ENCODE measurements at regions of chr16 and their contacts with region 1.

Region 1: GRCh38 chr16:66552286-66553177 is at the start of gene CKLF:
- DNase-seq: peak; percentile 96
- H3K4me3 ChIP-seq: peak within 1 kb of the TSS; percentile 13 to 65 (median 57)
- H3K27ac ChIP-seq: peak within 1 kb of the TSS; percentile 65
- H3K4me1 ChIP-seq: peaks cover 32% of the 10 kb centered on the region
- H3K27me3 ChIP-seq: no peaks in the 10 kb centered on the region
- CTCF ChIP-seq: no peak
- POLR2A ChIP-seq: peak; percentile 83
- total RNA-seq, gene CKLF: 80.0 and 93.4 TPM in 2 replicates

Region 2: DNA sequence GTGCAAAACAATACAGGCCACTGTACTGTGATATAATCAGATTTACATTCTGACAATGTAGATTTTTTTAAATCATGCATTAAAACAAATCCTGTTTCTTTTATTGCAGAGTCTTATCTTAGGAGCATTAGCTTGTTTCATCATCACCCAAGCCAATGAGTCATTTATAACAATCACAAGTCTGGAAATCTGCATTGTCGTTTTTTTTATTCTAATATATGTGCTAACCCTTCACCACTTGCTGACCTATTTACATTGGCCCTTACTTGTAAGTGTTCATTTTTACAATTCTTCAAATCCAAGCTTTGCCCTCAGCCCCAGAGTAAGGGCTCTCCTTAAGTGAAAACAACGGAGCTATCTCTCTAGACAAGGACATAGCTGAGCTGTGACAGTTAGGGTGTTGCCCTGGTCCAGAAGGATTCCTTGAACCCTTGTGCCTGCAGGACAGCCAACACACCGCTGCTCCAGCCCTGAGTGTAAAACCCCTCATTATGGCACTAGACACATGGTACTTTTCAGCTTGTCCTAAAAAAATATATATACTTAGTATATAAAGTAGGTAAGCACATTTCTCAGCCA is 17.4 kb after region 1 on chr16:
- CTCF ChIA-PET with region 1: interaction called, 15 read pairs
- POLR2A ChIA-PET with region 1: no interaction called
- dilution Hi-C with region 1: no loop called
- intact Hi-C with region 1: loop called (anchors 1 kb)
- DNase-seq: peak; percentile 76
- H3K4me3 ChIP-seq: no peak overlapping the region
- H3K27ac ChIP-seq: peak overlapping the region; percentile 79
- H3K4me1 ChIP-seq: peaks cover 34% of the 10 kb centered on the region
- H3K27me3 ChIP-seq: no peaks in the 10 kb centered on the region
- CTCF ChIP-seq: no peak
- POLR2A ChIP-seq: no peak

Measured in endothelial cell of umbilical vein (primary cell).